Dorsolateral prefrontal cortex (tissue), 120 donors: ENCODE measurements at regions of chr9 and their contacts with region 1.

Region 1: GRCh38 chr9:127785023-127785932 is 556 bp upstream of the CDK9 start:
- DNase-seq: peak; percentile 76 to 90 (median 80)
- H3K4me3 ChIP-seq: peak overlapping the region; percentile 37 to 100 (median 96)
- H3K27ac ChIP-seq: peak overlapping the region; percentile 52 to 98 (median 93)
- H3K27me3 ChIP-seq: no peaks in the 10 kb centered on the region
- CTCF ChIP-seq: peak; percentile 50 to 97 (median 88)

Region 2: GRCh38 chr9:127802576-127803443 is 17.5 kb after region 1 on chr9 and contains the start of gene FPGS:
- intact Hi-C with region 1: loop called (anchors 1 to 2 kb)
- DNase-seq: peak; percentile 62 to 90 (median 80)
- H3K4me3 ChIP-seq: peak within 1 kb of the TSS; percentile 53 to 93 (median 83)
- H3K27ac ChIP-seq: peak within 1 kb of the TSS; percentile 32 to 94 (median 88)
- H3K27me3 ChIP-seq: no peaks in the 10 kb centered on the region
- CTCF ChIP-seq: peak in 19 of 56 donors; percentile 3 to 39 (median 16)
- total RNA-seq, gene FPGS: 19.5 to 55.8 (median 36.6) TPM

Region 3: GRCh38 chr9:127817881-127818434 is 32.7 kb after region 1 on chr9:
- intact Hi-C with region 1: no loop called
- DNase-seq: peak in 1 of 10 donors; percentile 54
- H3K4me3 ChIP-seq: no peak overlapping the region
- H3K27ac ChIP-seq: peak overlapping the region in 3 of 59 donors; percentile 1 to 57 (median 4)
- H3K27me3 ChIP-seq: no peaks in the 10 kb centered on the region
- CTCF ChIP-seq: no peak